ENCODE measurements at regions of chrX and their contacts with region 1.

Region 1: DNA sequence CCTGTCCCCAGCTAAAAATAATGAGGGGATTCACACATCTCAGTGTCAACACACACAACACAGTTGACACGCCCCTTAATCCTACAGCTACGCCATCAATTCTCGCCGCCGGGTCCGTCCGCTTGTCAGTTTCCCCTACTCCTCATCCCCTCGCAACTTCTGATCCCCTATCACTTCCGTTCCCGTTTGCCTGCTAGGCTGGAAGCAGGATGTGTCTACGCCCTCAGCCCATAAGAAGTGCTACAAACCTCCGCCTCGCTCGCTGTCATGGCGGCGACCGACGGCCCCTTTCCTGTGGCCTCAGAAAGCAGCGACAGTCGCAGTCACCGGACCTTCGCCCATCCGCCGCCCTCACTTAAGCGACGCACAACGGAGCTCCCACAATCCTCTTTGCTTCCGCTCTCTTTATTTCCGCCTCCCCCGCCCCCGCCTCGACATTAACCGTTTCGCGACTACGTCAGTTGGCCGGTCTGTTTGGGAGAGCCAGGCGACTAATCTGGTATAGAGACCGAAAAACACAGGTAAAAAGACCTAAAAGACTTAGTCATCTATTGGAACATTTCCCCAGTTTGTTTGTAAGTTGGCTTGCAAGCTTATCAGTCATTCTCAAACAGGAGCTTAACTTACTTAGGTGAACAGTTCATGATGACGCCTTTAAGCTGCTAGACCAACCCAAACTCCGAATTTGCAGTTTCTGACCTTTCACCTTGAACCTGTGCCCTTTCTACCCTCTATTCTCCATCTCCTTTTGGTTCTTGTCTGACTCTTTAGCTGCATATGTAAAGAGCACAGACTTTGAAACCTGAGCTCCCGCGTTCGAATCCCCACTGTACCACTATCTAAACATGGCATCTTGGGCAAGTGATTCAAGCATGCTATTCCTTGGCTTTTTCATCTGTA is at the start of gene SLC25A53:
- DNase-seq: peak; percentile 71 to 81 (median 81)
- H3K4me3 ChIP-seq: peak within 1 kb of the TSS; percentile 62 to 82 (median 79)
- H3K4me3 Mint-ChIP-seq: peak within 1 kb of the TSS; percentile 87 to 96
- H3K27ac ChIP-seq: peak within 1 kb of the TSS; percentile 93 to 96
- H3K27ac Mint-ChIP-seq: peak within 1 kb of the TSS; percentile 98 to 100 (median 99)
- H3K4me1 ChIP-seq: peaks cover 10 to 11% of the 10 kb centered on the region in 2 donors
- H3K4me1 Mint-ChIP-seq: peaks cover 3% of the 10 kb centered on the region
- H3K27me3 ChIP-seq: no peaks in the 10 kb centered on the region
- H3K27me3 Mint-ChIP-seq: peaks cover 0 to 2% (median 0%) of the 10 kb centered on the region in 3 donors
- CTCF ChIP-seq: no peak
- polyA plus RNA-seq, gene SLC25A53: 5.9 to 9.6 (median 7.6) TPM

Region 2: DNA sequence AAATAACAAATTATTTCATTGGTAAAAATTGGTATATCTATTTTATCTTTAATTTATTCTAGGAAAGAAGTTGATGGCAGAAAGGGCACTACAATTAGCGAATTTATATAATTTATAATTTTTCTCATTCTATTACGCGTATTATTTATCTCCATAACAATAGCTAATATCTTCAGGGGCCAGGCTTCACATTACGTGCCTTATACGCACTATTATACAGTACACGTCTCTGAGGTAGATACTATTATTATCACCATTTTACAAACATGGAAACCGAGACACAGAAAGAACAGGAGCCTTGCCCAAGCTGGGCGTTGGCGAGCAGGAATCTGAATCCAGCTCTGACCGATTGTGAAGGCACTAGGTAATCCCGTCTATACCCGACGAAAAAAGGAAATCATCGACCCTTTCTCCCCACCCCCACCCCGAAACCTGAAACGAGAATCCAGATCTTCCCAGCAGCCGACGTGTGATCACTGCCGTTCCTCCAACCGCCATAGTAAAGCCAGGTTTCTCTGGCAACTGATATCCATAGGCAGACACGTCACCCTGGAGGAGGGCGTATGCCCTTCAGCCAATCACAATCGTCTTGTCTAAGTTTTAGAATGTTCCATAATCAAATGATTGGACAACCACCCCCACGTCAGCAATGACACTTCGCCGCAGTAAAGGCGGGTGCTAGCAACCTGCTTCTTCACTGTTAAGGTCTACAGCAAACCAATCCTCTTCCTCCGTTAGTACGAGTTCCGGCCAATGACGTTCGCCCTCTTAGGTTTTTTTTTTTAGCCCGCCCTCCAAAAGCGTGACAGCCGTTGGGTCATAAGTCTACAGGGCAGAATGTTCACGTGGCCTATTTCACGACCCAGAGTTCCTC is 470.4 kb before region 1 on chrX and contains the start of gene MORF4L2:
- intact Hi-C with region 1: loop called in 1 of 2 experiments (anchors 5 kb)
- DNase-seq: peak; percentile 95 to 98 (median 97)
- H3K4me3 ChIP-seq: peak within 1 kb of the TSS; percentile 78 to 94 (median 85)
- H3K4me3 Mint-ChIP-seq: peak within 1 kb of the TSS in 1 of 2 donors; percentile 83
- H3K27ac ChIP-seq: peak within 1 kb of the TSS; percentile 85 to 98
- H3K27ac Mint-ChIP-seq: peak within 1 kb of the TSS in 2 of 7 donors; percentile 85
- H3K4me1 ChIP-seq: peaks cover 0 to 3% of the 10 kb centered on the region in 2 donors
- H3K4me1 Mint-ChIP-seq: peaks cover 3% of the 10 kb centered on the region
- H3K27me3 ChIP-seq: no peaks in the 10 kb centered on the region
- H3K27me3 Mint-ChIP-seq: peaks cover 0 to 2% (median 0%) of the 10 kb centered on the region in 3 donors
- CTCF ChIP-seq: no peak
- polyA plus RNA-seq, gene MORF4L2: 83.5 to 86.4 (median 83.9) TPM

Region 3: GRCh38 chrX:104018126-104018525 is 138.8 kb before region 1 on chrX:
- intact Hi-C with region 1: no loop called
- DNase-seq: no peak
- H3K4me3 ChIP-seq: no peak overlapping the region
- H3K4me3 Mint-ChIP-seq: no peak overlapping the region
- H3K27ac ChIP-seq: no peak overlapping the region
- H3K27ac Mint-ChIP-seq: no peak overlapping the region
- H3K4me1 ChIP-seq: no peaks in the 10 kb centered on the region
- H3K4me1 Mint-ChIP-seq: no peaks in the 10 kb centered on the region
- H3K27me3 ChIP-seq: no peaks in the 10 kb centered on the region
- H3K27me3 Mint-ChIP-seq: peaks cover 1 to 11% (median 3%) of the 10 kb centered on the region in 3 donors
- CTCF ChIP-seq: no peak